Upper lobe of right lung (tissue), 1 donor: ENCODE measurements at regions of chr22 and their contacts with region 1.

Region 1: GRCh38 chr22:27804470-27805297 is 3.1 kb upstream of the MN1 start:
- DNase-seq: peak; percentile 76
- ATAC-seq: peak; percentile 67
- H3K4me3 ChIP-seq: no peak overlapping the region
- H3K27ac ChIP-seq: no peak overlapping the region
- H3K4me1 ChIP-seq: peaks cover 20% of the 10 kb centered on the region
- H3K27me3 ChIP-seq: peaks cover 18% of the 10 kb centered on the region
- CTCF ChIP-seq: peak; percentile 73

Region 2: GRCh38 chr22:26756675-26757293 is 1047.9 kb before region 1 on chr22:
- intact Hi-C with region 1: loop called (anchors 10 kb)
- DNase-seq: peak; percentile 74
- ATAC-seq: peak; percentile 92
- H3K4me3 ChIP-seq: peak overlapping the region; percentile 25
- H3K27ac ChIP-seq: no peak overlapping the region
- H3K4me1 ChIP-seq: no peaks in the 10 kb centered on the region
- H3K27me3 ChIP-seq: no peaks in the 10 kb centered on the region
- CTCF ChIP-seq: peak; percentile 94

Region 3: GRCh38 chr22:27576815-27577573 is 227.7 kb before region 1 on chr22:
- intact Hi-C with region 1: no loop called
- DNase-seq: no peak
- ATAC-seq: no peak
- H3K4me3 ChIP-seq: no peak overlapping the region
- H3K27ac ChIP-seq: peak overlapping the region; percentile 36
- H3K4me1 ChIP-seq: no peaks in the 10 kb centered on the region
- H3K27me3 ChIP-seq: peaks cover 32% of the 10 kb centered on the region
- CTCF ChIP-seq: no peak

Region 4: GRCh38 chr22:28075358-28075981 is 270.8 kb after region 1 on chr22:
- intact Hi-C with region 1: no loop called
- DNase-seq: no peak
- ATAC-seq: peak; percentile 82
- H3K4me3 ChIP-seq: no peak overlapping the region
- H3K27ac ChIP-seq: peak overlapping the region; percentile 18
- H3K4me1 ChIP-seq: peaks cover 9% of the 10 kb centered on the region
- H3K27me3 ChIP-seq: no peaks in the 10 kb centered on the region
- CTCF ChIP-seq: no peak